ENCODE measurements at regions of chr5 and their contacts with region 1.

Region 1: GRCh38 chr5:64634997-64635686 is 55.2 kb upstream of the SHISAL2B start:
- DNase-seq: peak; percentile 47
- H3K4me3 ChIP-seq: no peak overlapping the region
- H3K27ac ChIP-seq: no peak overlapping the region
- H3K4me1 ChIP-seq: no peaks in the 10 kb centered on the region
- CTCF ChIP-seq: peak; percentile 99

Region 2: DNA sequence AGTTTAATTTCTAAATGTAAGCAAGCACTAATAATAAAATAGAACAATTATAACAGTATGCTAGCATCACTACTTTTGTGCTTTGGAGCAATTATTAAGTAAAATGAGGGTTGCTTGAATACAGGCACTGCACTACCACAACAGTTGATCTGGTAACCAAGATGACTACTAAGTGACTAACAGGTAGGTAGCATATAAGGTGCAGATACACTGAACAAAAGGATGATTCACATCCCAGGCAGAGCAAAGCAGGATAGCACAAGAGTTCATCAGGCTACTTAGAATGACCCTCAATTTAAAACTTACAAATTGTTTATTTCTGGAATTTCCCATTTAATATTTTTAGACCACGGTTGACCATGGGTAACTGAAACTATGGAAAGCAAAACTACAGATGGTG is 177.3 kb before region 1 on chr5:
- CTCF ChIA-PET with region 1: no interaction called
- POLR2A ChIA-PET with region 1: no interaction called
- intact Hi-C with region 1: no loop called
- DNase-seq: no peak
- H3K4me3 ChIP-seq: no peak overlapping the region
- H3K27ac ChIP-seq: no peak overlapping the region
- H3K4me1 ChIP-seq: no peaks in the 10 kb centered on the region
- CTCF ChIP-seq: no peak

Region 3: DNA sequence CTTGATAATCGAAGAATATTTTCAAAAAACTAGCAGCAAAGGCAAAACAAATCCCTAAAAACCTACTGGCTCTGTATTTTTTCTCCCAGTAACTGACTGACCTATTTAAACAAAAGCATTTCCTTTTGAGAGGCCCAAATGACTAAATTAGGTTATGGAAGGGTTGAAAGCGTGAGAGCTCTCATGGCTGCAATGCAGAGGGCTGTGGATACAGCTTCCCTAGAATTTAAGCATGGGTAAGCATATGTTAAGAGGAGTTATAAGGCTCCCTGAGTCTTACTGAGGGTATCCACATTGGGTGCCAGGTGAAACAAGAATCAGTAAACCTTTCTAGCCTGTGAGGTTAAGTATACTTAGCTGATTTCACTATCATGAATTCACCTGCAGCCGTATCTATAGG is 87.4 kb after region 1 on chr5:
- CTCF ChIA-PET with region 1: no interaction called
- POLR2A ChIA-PET with region 1: no interaction called
- intact Hi-C with region 1: no loop called
- DNase-seq: no peak
- H3K4me3 ChIP-seq: no peak overlapping the region
- H3K27ac ChIP-seq: no peak overlapping the region
- H3K4me1 ChIP-seq: no peaks in the 10 kb centered on the region
- CTCF ChIP-seq: no peak

Region 4: GRCh38 chr5:64784451-64785025 is 149.4 kb after region 1 on chr5:
- CTCF ChIA-PET with region 1: interaction called, 5 read pairs
- POLR2A ChIA-PET with region 1: no interaction called
- intact Hi-C with region 1: loop called (anchors 1 kb)
- DNase-seq: peak; percentile 83
- H3K4me3 ChIP-seq: no peak overlapping the region
- H3K27ac ChIP-seq: no peak overlapping the region
- H3K4me1 ChIP-seq: no peaks in the 10 kb centered on the region
- CTCF ChIP-seq: peak; percentile 100

Region 5: DNA sequence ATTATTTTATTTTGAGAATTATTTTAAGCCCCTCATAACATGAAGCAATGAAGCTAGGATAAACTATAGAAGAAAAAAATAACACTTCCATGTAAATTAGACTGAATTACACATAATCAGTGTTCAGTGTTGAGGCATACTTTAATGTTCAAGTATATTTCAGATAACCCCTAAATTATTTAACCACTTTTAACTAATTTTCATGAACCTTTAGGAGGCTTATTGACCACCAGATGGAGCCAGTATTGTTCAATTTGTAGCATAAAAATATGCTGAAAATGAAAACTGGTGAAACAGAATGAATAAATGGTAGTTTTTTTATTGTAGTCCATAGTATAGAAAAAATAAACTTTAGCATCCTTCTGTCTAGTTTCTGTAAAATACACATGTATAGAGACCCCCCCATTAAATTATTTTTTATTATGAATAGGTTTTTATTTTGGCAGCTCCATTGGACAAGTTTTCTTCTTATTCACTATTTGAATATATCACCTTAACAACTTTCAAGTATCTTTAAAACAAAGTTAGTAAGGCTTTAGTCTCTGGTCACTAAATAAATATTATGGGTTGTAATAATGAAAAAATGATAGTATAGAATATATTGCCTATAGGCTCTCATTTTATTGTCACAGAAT is 323.7 kb after region 1 on chr5:
- CTCF ChIA-PET with region 1: no interaction called
- POLR2A ChIA-PET with region 1: no interaction called
- intact Hi-C with region 1: loop called (anchors 10 kb)
- DNase-seq: peak; percentile 78
- H3K4me3 ChIP-seq: no peak overlapping the region
- H3K27ac ChIP-seq: no peak overlapping the region
- H3K4me1 ChIP-seq: no peaks in the 10 kb centered on the region
- CTCF ChIP-seq: peak; percentile 97